ENCODE measurements at regions of chr16 and their contacts with region 1.

Region 1: GRCh38 chr16:70380861-70381603 is 34.3 kb downstream of the DDX19A start:
- DNase-seq: peak; percentile 98
- H3K4me3 Mint-ChIP-seq: peak overlapping the region; percentile 94
- H3K27ac Mint-ChIP-seq: peak overlapping the region; percentile 96
- H3K4me1 Mint-ChIP-seq: peaks cover 21% of the 10 kb centered on the region
- H3K27me3 Mint-ChIP-seq: no peaks in the 10 kb centered on the region

Region 2: DNA sequence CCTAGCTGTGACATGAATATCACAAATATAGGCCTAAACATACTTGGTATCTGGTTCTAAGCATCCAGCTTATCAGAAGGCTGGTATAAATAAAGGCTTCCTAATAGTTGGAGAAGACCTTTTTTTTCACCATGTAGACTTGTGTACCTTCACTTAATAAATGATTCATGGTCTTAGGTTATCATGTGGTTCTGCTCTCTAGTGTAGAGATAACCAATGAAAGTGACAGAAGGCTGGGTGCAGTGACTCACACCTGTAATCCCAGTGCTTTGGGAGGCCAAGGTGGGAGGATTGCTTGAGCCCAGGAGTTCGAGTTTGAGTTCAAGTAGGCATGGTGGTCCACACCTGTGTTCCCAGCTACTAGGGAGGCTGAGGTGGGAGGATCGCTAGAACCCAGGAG is 31.2 kb before region 1 on chr16:
- CTCF ChIA-PET with region 1: interaction called, 7 read pairs
- POLR2A ChIA-PET with region 1: interaction called, 68 read pairs
- DNase-seq: no peak
- H3K4me3 Mint-ChIP-seq: no peak overlapping the region
- H3K27ac Mint-ChIP-seq: no peak overlapping the region
- H3K4me1 Mint-ChIP-seq: peaks cover 38% of the 10 kb centered on the region
- H3K27me3 Mint-ChIP-seq: no peaks in the 10 kb centered on the region

Region 3: DNA sequence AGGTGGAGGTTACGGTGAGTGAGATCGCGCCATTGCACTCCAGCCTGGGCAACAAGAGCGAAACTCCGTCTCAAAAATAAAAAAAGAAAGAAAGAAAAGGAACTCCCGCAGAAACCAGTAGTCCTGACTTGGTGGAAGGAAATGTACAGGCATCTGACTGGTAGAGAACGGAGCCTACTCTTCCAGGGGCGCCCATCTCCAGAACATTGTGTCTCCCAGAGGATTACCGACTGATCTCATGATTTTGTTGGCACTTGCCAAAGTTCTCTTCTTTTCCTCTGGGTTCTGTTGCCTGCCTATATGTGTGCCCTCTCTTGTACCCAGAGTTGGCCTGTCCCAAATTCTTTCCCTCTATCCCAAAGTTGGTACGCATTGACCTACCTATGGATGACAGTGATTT is 10.1 kb before region 1 on chr16:
- CTCF ChIA-PET with region 1: interaction called, 28 read pairs
- POLR2A ChIA-PET with region 1: interaction called, 12 read pairs
- DNase-seq: no peak
- H3K4me3 Mint-ChIP-seq: no peak overlapping the region
- H3K27ac Mint-ChIP-seq: no peak overlapping the region
- H3K4me1 Mint-ChIP-seq: peaks cover 7% of the 10 kb centered on the region
- H3K27me3 Mint-ChIP-seq: no peaks in the 10 kb centered on the region

Region 4: DNA sequence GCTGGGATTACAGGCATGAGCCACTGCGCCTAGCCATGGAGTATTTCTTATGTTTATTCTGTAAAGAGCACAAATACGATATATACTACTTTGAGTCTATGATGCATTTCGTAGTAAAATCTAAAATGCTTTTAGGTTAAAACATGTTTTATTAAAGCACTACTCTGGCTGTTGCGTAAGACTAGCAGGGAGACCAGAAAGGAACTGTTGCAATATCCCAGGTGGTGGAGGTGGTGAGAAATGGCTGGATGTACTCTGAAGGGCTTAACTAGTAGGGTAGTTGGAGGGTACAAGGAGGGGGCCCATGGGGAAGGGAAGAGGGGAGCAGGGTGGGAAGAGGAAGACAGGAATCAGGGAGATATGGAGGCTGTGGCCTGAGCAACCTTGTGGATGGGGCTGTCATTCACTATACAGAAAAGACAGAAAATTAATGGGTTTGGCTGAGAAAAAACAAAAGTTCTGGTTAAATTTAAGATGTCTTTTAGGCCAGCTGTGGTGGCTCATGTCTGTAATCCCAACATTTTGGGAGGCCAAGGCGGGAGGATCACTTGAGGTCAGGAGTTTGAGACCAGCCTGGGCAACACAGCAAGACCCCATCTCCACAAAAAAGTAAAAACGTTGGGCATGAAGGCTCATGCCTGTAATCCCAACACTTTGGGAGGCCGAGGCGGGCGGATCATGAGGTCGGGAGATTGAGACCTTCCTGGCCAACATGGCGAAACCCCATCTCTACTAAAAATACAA is 22.1 kb after region 1 on chr16:
- CTCF ChIA-PET with region 1: interaction called, 5 read pairs
- POLR2A ChIA-PET with region 1: interaction called, 18 read pairs
- DNase-seq: no peak
- H3K4me3 Mint-ChIP-seq: no peak overlapping the region
- H3K27ac Mint-ChIP-seq: no peak overlapping the region
- H3K4me1 Mint-ChIP-seq: peaks cover 36% of the 10 kb centered on the region
- H3K27me3 Mint-ChIP-seq: peaks cover 1% of the 10 kb centered on the region

Region 5: GRCh38 chr16:70438969-70439862 is 58.2 kb after region 1 on chr16 and contains the start of gene ST3GAL2:
- CTCF ChIA-PET with region 1: interaction called, 4 read pairs
- POLR2A ChIA-PET with region 1: interaction called, 27 read pairs
- DNase-seq: peak; percentile 96
- H3K4me3 Mint-ChIP-seq: peak within 1 kb of the TSS; percentile 88
- H3K27ac Mint-ChIP-seq: peak within 1 kb of the TSS; percentile 74
- H3K4me1 Mint-ChIP-seq: peaks cover 29% of the 10 kb centered on the region
- H3K27me3 Mint-ChIP-seq: no peaks in the 10 kb centered on the region
- total RNA-seq, gene ST3GAL2: 21.6 to 22.7 TPM

Region 6: GRCh38 chr16:70478912-70479341 is 97.9 kb after region 1 on chr16:
- CTCF ChIA-PET with region 1: no interaction called
- POLR2A ChIA-PET with region 1: interaction called, 21 read pairs
- DNase-seq: no peak
- H3K4me3 Mint-ChIP-seq: no peak overlapping the region
- H3K27ac Mint-ChIP-seq: no peak overlapping the region
- H3K4me1 Mint-ChIP-seq: peaks cover 31% of the 10 kb centered on the region
- H3K27me3 Mint-ChIP-seq: no peaks in the 10 kb centered on the region